Aorta (tissue), 5 donors: ENCODE measurements at regions of chr20 and their contacts with region 1.

Region 1: DNA sequence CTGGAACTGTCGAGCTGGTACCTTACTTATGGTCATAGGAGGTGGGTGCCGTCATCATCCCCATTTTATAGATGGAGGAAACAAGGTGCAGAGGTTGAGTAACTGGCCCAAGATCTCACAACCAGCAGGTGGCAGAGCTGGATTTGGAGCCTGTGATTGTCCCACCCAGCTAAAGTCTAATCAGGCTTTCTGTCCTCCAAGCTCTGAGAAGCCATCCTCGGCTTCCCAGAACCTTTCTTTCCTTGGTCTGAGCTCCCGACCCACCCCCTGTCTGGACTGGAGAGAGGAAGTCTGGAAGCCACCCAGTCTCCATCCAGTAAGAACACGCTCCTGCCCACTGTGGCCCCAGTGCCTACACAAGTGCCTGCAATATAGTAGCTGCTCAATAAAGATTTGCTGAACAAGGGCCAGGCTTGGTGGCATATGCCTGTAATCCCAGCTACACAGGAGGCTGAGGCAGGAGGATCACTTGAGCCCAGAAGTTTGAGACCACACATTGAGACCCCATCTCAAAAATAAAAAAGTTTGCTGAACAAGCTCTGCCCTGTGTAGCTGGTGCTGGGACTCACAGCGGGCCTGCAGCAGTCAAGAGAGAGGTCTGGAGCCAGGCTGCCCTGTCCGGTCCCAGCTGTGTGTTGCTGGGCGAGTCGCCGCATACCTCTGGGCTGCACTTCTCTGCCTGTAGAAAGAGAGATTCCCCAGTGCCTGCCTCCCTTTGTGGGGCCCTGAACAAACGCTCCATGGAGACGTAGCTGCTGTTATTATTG is 32.5 kb upstream of the DLGAP4 start:
- DNase-seq: peak in 1 of 2 donors; percentile 47
- ATAC-seq: no peak
- H3K4me3 ChIP-seq: no peak overlapping the region
- H3K27ac ChIP-seq: no peak overlapping the region
- H3K4me1 ChIP-seq: no peaks in the 10 kb centered on the region
- H3K27me3 ChIP-seq: no peaks in the 10 kb centered on the region

Region 2: GRCh38 chr20:36439040-36439730 is 165.6 kb after region 1 on chr20:
- intact Hi-C with region 1: loop called in 1 of 2 experiments (anchors 5 kb)
- DNase-seq: peak; percentile 75 to 87
- ATAC-seq: no peak
- H3K4me3 ChIP-seq: no peak overlapping the region
- H3K27ac ChIP-seq: no peak overlapping the region
- H3K4me1 ChIP-seq: no peaks in the 10 kb centered on the region
- H3K27me3 ChIP-seq: no peaks in the 10 kb centered on the region